Mammary epithelial cell (primary cell): ENCODE measurements at regions of chr18 and their contacts with region 1.

Region 1: DNA sequence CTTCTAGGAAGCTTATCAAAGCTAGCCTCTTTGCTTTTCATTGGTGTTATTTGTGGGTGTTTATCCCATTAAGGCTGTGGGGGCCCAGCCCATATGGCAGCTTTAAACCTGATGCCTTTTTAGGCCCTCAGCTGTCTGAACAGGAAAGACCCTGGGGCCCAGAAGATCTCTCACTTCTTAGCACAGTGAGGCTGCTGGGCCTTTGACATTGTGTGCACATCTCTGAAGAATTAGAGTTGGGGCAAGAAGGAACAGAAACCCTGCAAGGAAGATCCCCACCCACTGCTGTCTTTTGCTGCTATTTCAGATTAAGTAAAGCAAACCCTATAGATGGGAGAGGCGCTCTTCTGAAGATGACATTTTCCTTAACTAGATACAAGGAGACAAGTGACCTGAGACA is 250.0 kb downstream of the SMAD2 start:
- DNase-seq: no peak
- H3K4me3 ChIP-seq: no peak overlapping the region
- H3K27ac ChIP-seq: no peak overlapping the region
- H3K4me1 ChIP-seq: no peaks in the 10 kb centered on the region
- H3K27me3 ChIP-seq: peaks cover 1% of the 10 kb centered on the region
- CTCF ChIP-seq: no peak

Region 2: DNA sequence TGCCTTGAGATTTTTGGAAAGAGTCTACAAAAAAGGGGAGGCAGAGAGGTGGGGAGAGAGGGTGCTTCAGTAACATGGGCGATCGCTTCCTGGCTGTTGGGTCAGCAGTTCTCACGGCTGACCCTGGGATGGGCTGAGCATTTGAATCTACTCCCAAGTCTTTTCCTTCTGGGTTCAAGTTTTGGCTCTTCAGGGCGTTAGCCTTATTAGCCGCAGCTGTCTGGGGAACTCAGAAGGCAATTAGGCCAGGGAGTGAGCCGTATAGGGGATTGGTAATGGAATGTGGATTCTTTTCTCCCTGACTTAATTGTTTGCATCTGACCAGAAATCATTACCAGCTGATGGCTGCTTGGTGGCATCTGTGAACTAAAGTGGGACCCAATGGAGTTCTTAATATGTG is 178.5 kb before region 1 on chr18:
- CTCF ChIA-PET with region 1: no interaction called
- dilution Hi-C with region 1: no loop called
- in situ Hi-C with region 1: no loop called
- intact Hi-C with region 1: no loop called
- DNase-seq: no peak
- H3K4me3 ChIP-seq: no peak overlapping the region
- H3K27ac ChIP-seq: no peak overlapping the region
- H3K4me1 ChIP-seq: no peaks in the 10 kb centered on the region
- H3K27me3 ChIP-seq: no peaks in the 10 kb centered on the region
- CTCF ChIP-seq: no peak

Region 3: GRCh38 chr18:47582093-47582492 is 98.4 kb before region 1 on chr18:
- CTCF ChIA-PET with region 1: no interaction called
- dilution Hi-C with region 1: loop called (anchors 5 kb)
- in situ Hi-C with region 1: no loop called
- intact Hi-C with region 1: no loop called
- DNase-seq: no peak
- H3K4me3 ChIP-seq: no peak overlapping the region
- H3K27ac ChIP-seq: no peak overlapping the region
- H3K4me1 ChIP-seq: no peaks in the 10 kb centered on the region
- H3K27me3 ChIP-seq: peaks cover 3% of the 10 kb centered on the region
- CTCF ChIP-seq: no peak